ENCODE measurements at regions of chr15 and their contacts with region 1.

Region 1: GRCh38 chr15:75069301-75069925 is 46.0 kb downstream of the PPCDC start:
- DNase-seq: no peak
- H3K4me3 ChIP-seq: no peak overlapping the region
- H3K4me3 Mint-ChIP-seq: no peak overlapping the region
- H3K27ac Mint-ChIP-seq: no peak overlapping the region
- H3K4me1 ChIP-seq: peaks cover 36% of the 10 kb centered on the region
- H3K4me1 Mint-ChIP-seq: peaks cover 41% of the 10 kb centered on the region
- H3K27me3 ChIP-seq: no peaks in the 10 kb centered on the region
- H3K27me3 Mint-ChIP-seq: no peaks in the 10 kb centered on the region
- CTCF ChIP-seq: no peak

Region 2: DNA sequence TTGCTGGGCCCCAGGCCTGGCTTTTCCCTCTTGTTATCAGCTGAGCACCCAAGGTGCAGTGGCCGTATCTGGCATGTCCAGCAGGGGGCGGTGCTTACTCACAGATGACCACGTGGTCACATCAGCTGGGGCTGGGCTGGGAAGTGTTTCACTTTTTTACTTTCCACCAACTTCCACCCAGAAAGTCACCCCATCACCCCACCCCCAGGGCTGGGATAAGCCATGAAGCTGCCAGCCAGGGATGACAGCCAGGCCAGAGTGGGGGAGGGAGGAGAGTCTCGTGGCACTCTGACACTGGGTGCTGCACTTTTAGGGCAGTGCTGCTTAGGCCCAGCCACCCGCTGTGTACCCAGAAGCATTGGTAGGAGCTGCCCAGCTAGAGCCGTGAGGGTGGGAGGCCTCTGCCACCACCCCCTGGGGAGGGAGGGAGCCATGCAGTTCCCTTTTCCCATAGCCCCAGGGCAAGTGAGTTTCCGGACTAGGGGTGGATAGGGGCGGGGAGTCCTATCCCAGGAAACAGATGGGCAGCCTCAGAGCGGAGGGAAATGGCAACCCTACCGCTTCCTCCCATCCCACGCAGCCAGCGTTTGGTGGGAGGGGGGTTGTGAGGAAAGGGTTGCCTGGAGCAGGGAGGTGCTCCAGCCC is 39.9 kb before region 1 on chr15:
- CTCF ChIA-PET with region 1: interaction called, 11 read pairs
- POLR2A ChIA-PET with region 1: no interaction called
- intact Hi-C with region 1: no loop called
- DNase-seq: peak; percentile 83 to 90
- H3K4me3 ChIP-seq: no peak overlapping the region
- H3K4me3 Mint-ChIP-seq: no peak overlapping the region
- H3K27ac Mint-ChIP-seq: peak overlapping the region; percentile 16
- H3K4me1 ChIP-seq: peaks cover 38% of the 10 kb centered on the region
- H3K4me1 Mint-ChIP-seq: peaks cover 15% of the 10 kb centered on the region
- H3K27me3 ChIP-seq: no peaks in the 10 kb centered on the region
- H3K27me3 Mint-ChIP-seq: no peaks in the 10 kb centered on the region
- CTCF ChIP-seq: peak; percentile 88 to 91

Region 3: DNA sequence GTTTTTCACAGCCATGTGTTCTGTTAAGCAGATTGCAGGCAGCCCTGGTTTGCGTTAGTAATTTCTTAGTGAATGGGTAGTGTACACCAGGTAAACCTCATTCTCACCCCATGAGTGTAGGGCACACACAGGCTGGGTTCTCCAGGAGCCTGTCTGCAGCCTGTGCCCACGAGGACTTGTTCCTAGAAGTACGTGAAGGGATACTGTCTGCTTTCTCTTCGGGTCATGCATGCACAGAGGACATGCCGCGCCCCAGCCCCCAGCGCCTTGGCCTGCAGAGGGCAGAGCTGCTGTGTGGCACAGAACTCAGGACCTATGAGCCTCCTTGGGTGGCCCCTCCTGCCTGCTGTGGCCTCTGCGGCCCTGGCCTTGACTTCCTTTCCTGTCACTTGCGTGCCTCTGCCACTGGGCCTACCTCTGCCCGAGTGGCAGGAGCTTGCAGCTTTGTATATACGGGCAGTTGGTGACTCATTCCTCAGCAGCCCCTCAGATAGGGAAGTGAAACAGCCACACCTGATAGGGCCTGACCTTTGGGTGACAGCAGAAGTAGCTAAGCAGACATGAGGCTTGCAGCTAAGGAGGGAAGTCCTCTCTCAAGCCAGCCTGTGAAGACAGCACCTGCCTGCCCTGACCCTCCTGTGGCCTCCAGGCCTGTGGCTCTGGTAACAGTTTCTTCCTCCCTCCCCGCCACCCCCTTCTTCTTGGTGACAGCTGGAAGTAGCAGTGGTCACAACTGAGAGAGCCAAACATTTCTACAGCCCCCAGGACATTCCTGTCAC is 26.5 kb before region 1 on chr15:
- CTCF ChIA-PET with region 1: interaction called, 9 read pairs
- POLR2A ChIA-PET with region 1: interaction called, 3 read pairs
- intact Hi-C with region 1: loop called (anchors 2 kb)
- DNase-seq: peak; percentile 79
- H3K4me3 ChIP-seq: no peak overlapping the region
- H3K4me3 Mint-ChIP-seq: no peak overlapping the region
- H3K27ac Mint-ChIP-seq: peak overlapping the region; percentile 82
- H3K4me1 ChIP-seq: peaks cover 36% of the 10 kb centered on the region
- H3K4me1 Mint-ChIP-seq: peaks cover 41% of the 10 kb centered on the region
- H3K27me3 ChIP-seq: no peaks in the 10 kb centered on the region
- H3K27me3 Mint-ChIP-seq: no peaks in the 10 kb centered on the region
- CTCF ChIP-seq: peak; percentile 55 to 63

Region 4: GRCh38 chr15:75091814-75092213 is 22.4 kb after region 1 on chr15:
- CTCF ChIA-PET with region 1: no interaction called
- POLR2A ChIA-PET with region 1: no interaction called
- intact Hi-C with region 1: no loop called
- DNase-seq: no peak
- H3K4me3 ChIP-seq: no peak overlapping the region
- H3K4me3 Mint-ChIP-seq: no peak overlapping the region
- H3K27ac Mint-ChIP-seq: no peak overlapping the region
- H3K4me1 ChIP-seq: no peaks in the 10 kb centered on the region
- H3K4me1 Mint-ChIP-seq: no peaks in the 10 kb centered on the region
- H3K27me3 ChIP-seq: no peaks in the 10 kb centered on the region
- H3K27me3 Mint-ChIP-seq: no peaks in the 10 kb centered on the region
- CTCF ChIP-seq: no peak

Region 5: GRCh38 chr15:75138016-75138999 is 68.9 kb after region 1 on chr15:
- CTCF ChIA-PET with region 1: no interaction called
- POLR2A ChIA-PET with region 1: interaction called, 8 read pairs
- intact Hi-C with region 1: loop called (anchors 2 kb)
- DNase-seq: peak; percentile 40 to 67
- H3K4me3 ChIP-seq: no peak overlapping the region
- H3K4me3 Mint-ChIP-seq: no peak overlapping the region
- H3K27ac Mint-ChIP-seq: peak overlapping the region; percentile 92
- H3K4me1 ChIP-seq: peaks cover 43% of the 10 kb centered on the region
- H3K4me1 Mint-ChIP-seq: peaks cover 30% of the 10 kb centered on the region
- H3K27me3 ChIP-seq: no peaks in the 10 kb centered on the region
- H3K27me3 Mint-ChIP-seq: no peaks in the 10 kb centered on the region
- CTCF ChIP-seq: no peak

Region 6: GRCh38 chr15:75161917-75162414 is 92.6 kb after region 1 on chr15:
- CTCF ChIA-PET with region 1: interaction called, 10 read pairs
- POLR2A ChIA-PET with region 1: no interaction called
- intact Hi-C with region 1: loop called (anchors 5 kb)
- DNase-seq: peak; percentile 75 to 79
- H3K4me3 ChIP-seq: no peak overlapping the region
- H3K4me3 Mint-ChIP-seq: peak overlapping the region; percentile 44
- H3K27ac Mint-ChIP-seq: peak overlapping the region; percentile 64
- H3K4me1 ChIP-seq: peaks cover 42% of the 10 kb centered on the region
- H3K4me1 Mint-ChIP-seq: no peaks in the 10 kb centered on the region
- H3K27me3 ChIP-seq: no peaks in the 10 kb centered on the region
- H3K27me3 Mint-ChIP-seq: no peaks in the 10 kb centered on the region
- CTCF ChIP-seq: no peak

Region 7: GRCh38 chr15:75182187-75183131 is 113.0 kb after region 1 on chr15:
- CTCF ChIA-PET with region 1: interaction called, 4 read pairs
- POLR2A ChIA-PET with region 1: interaction called, 15 read pairs
- intact Hi-C with region 1: no loop called
- DNase-seq: peak; percentile 60 to 82
- H3K4me3 ChIP-seq: no peak overlapping the region
- H3K4me3 Mint-ChIP-seq: peak overlapping the region; percentile 59
- H3K27ac Mint-ChIP-seq: peak overlapping the region; percentile 83
- H3K4me1 ChIP-seq: peaks cover 59% of the 10 kb centered on the region
- H3K4me1 Mint-ChIP-seq: peaks cover 42% of the 10 kb centered on the region
- H3K27me3 ChIP-seq: no peaks in the 10 kb centered on the region
- H3K27me3 Mint-ChIP-seq: no peaks in the 10 kb centered on the region
- CTCF ChIP-seq: peak; percentile 23 to 40

Measured in Caco-2 (cell line).